ENCODE measurements at regions of chr9 and their contacts with region 1.

Region 1: DNA sequence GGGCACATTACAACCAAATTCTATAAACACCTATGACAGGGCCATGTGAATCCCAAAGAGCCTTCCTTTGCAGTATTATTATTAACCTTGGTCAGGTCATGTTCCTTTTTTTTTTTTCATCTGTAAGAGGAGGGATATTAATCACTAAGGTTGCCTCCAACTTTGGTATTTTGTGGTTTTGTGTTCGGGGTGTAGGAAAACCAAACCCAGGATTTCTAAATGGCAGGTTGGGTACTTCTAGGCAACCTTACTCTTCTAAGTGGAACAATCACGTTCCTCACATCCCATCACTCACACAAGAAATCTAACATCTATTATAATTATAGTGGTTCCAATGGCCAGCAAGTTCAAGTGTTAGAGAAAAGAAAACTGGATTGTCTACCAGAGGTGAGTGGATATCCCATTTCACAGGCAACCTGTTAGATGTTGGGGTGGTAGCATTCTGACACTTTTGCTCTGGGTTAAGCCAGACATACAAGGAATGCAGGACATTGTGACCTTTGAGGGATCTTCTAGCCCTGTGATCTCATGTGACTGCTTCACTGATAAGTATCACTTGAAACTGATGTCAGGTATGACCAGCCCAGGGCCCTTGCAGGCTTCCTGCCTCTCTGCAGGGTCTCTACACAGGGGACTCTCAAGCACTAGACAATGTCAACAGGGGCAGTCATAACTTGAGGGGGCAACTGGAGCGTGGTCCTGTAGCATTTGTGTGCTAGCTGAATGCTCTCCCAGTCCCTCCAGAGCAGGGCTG is 126.2 kb upstream of the VLDLR start:
- DNase-seq: no peak
- ATAC-seq: no peak

Region 2: GRCh38 chr9:2567922-2568321 is 72.5 kb after region 1 on chr9:
- intact Hi-C with region 1: loop called (anchors 5 kb)
- DNase-seq: no peak
- ATAC-seq: peak; percentile 40

Region 3: DNA sequence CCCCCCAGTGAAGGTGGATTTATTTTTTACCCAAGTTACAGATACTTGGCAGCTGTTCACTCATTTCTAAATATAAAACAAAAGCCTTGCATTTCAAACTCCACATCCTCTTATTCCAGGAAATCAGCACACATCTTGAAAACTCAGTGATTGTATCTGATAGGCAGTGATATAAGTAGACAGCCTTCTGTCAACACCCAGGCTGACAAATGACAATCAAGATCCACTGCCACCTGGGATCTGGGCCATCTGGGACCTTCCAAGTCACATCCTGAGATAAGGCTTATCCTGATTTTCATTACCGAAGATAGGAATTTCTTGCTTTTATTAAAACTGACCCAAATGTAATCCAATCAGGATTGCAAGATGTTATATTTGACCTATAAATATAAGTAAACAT is 549.8 kb after region 1 on chr9:
- intact Hi-C with region 1: no loop called
- DNase-seq: no peak
- ATAC-seq: no peak